Body of pancreas (tissue), 4 donors: ENCODE measurements at regions of chr1 and their contacts with region 1.

Region 1: DNA sequence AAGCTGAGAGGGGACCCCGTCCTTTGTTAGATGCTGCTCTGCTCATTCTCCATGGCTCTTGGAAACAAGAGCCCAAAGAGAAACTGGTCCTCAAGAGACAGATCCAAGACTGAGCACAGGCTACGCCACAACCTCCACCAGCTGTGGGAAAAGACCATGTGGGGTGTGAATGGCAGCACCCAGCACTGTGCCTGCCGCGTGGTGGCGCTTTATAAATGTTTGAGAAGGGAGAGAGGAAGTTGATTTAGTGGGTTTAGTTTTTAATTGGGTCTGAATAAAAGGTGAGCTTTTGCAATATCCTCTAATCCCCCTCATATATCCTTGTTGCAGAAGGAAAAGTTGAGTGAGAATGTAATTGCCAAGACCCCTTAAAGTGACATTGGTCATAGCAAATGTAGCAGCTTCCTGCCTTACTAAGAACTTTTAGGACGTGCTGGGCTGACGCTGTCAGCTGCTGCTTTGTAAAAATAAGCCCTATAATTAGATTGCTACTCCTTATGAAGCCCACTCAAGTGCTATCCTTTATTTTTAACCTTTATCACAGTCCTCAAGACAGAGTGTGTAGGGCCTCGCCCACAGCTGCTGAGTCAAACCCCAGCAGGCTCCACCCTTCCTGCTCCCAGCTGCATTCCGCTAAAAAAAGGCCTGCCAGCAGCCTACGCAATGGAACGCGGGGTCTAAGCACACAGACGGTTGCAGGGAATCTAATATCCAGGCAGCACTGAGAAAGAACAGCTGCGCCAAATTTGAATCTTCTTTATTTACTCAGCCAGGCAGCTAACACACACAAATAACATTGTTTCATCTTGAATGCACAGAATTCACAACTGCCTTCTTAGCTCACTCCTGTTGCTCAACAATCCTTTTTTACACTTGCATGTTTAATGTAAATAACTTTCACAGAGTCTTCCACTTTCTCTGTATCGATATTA is 47.4 kb upstream of the PRDX6 start:
- DNase-seq: peak; percentile 84 to 89 (median 86)
- ATAC-seq: peak; percentile 92
- H3K4me3 ChIP-seq: no peak overlapping the region
- H3K27ac ChIP-seq: peak overlapping the region; percentile 63 to 85 (median 71)
- H3K4me1 ChIP-seq: peaks cover 18% of the 10 kb centered on the region
- H3K27me3 ChIP-seq: no peaks in the 10 kb centered on the region
- CTCF ChIP-seq: peak; percentile 55 to 88 (median 74)
- POLR2A ChIP-seq: peak in 2 of 3 donors; percentile 54 to 61

Region 2: GRCh38 chr1:173496757-173497323 is 67.1 kb after region 1 on chr1:
- intact Hi-C with region 1: loop called (anchors 10 kb)
- DNase-seq: no peak
- ATAC-seq: no peak
- H3K4me3 ChIP-seq: no peak overlapping the region
- H3K27ac ChIP-seq: no peak overlapping the region
- H3K4me1 ChIP-seq: no peaks in the 10 kb centered on the region
- H3K27me3 ChIP-seq: no peaks in the 10 kb centered on the region
- CTCF ChIP-seq: no peak
- POLR2A ChIP-seq: no peak

Region 3: DNA sequence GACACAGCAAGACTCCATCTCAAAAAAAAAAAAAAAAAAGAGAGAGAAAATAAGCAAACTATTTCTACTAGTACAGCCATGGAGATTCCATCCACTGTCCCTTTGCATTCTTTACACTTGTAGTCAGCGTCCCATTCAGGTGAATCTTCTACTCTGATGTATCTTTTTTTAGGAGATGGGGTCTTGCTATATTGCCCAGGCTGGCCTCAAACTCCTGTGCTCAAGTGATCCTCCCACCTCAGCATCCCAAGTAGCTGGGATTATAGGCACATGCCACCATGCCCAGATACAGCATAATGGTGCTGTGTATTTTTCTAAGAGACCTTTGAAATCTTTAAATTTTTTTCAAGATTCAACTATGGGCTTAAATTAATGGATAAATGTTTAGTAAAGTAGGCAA is 403.0 kb after region 1 on chr1:
- intact Hi-C with region 1: loop called (anchors 10 kb)
- DNase-seq: no peak
- ATAC-seq: no peak
- H3K4me3 ChIP-seq: no peak overlapping the region
- H3K27ac ChIP-seq: no peak overlapping the region
- H3K4me1 ChIP-seq: no peaks in the 10 kb centered on the region
- H3K27me3 ChIP-seq: no peaks in the 10 kb centered on the region
- CTCF ChIP-seq: no peak
- POLR2A ChIP-seq: no peak